ENCODE measurements at regions of chr12 and their contacts with region 1.

Region 1: DNA sequence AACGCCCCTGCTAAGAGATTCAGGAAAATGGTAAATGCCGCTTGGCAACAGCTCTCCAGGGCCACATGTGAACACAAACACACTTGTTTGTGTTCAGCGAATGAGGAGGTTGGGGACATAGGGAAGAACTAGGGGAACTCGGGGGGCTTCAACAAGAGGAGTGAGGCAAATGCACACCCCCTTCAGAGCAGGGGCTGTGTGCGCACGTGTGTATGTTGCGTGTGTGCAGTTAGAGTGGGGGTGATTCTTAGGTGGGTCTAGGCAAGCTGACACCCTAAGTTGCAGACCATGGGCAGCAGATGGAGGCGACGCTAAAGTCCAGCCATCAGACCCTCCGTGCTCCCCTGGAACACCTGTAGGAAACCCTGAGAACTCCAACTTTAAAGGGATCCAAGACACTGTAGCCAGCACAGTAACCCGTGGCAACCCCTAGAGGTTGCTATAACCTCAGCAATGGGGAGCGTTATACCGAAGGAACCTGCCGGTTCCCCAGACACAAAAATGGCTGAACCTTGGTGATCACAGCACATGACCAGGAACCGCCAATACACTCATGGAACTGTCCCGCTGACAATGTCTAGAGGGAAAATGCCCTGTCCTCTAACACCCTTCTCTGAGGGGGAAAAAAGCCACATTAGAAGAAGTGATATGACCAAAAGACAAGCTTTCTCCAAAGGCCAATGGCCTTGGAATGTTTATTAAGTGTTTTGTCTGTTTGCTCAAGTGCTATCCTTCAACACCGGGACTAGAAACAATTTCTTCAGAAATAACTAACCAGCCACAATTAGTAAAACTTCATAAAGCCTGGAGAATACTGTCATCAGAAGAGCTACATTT is 86.5 kb upstream of the CEP83 start:
- DNase-seq: no peak
- ATAC-seq: peak; percentile 94

Region 2: DNA sequence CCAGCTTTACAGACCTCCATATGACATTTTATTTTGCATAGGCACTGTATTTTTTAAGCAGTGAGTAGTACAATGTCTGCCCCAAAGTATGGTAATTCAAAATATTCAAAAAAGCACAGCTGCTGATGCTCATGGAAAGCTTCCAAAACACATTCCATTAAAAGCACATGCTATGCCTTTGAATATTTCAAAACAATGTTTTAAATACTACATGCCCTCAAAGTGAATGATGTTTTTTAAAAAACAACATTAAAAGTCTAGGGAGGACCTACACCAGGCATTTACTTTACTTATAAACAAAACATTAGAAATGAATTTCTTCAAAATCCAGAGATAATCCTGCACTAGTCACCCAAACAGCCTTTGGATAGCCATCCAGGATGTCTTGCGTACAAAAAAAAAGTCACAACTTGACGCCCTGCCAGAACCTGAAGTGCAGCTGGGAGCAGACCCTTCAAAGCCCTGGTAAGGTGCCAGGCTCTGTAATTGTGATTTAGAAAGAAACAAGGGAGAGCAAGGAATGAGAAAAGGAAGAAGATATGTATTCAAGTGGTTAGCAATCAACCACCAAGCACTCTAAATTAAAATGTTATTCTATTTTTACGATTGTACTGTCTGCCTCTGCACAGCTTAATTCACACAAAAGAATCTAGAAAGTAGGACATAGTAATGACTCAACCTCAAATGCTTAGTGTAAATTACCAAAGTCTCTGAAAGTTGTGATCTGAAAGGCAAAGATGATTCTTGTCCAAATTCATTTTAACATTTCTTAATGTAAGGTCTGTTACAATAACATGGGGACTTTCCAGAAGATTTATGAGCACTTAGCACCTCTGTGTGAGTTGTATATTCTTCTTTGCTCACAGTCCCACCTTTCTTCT is 118.4 kb before region 1 on chr12:
- intact Hi-C with region 1: no loop called
- DNase-seq: no peak
- ATAC-seq: peak; percentile 78

Region 3: GRCh38 chr12:94603434-94604365 is 57.5 kb after region 1 on chr12:
- intact Hi-C with region 1: no loop called
- DNase-seq: no peak
- ATAC-seq: no peak

Region 4: DNA sequence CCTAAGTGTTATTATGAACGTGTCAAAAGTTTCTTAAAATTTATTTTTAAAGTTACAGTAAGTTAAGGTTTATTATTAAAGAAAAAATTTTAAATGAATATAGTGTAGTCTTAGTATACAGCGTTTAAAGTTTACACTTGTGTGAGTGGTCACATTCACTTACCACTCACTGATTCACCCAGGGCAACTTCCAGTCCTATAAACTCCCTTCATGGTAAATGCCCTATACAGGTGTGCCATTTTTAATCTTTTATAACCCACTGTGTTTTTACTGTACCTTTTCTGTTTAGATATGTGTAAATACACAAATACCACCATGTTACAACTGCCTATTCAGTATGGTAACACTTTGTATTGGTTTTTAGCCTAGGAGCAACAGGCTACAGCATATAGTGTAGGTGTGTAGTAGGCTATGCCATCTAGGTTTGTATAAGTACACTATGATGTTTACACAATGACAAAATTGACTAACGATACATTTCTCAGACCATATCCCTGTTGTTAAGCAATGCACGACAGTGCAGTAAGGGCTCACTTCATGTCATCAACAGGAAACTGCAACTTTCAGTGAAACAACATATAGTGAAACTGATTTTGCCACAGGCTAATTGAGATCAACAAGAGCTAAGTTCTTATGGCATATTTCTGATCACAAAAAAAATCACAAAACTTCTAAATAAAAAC is 216.2 kb after region 1 on chr12:
- intact Hi-C with region 1: loop called (anchors 10 kb)
- DNase-seq: no peak
- ATAC-seq: no peak

Region 5: GRCh38 chr12:95336390-95337067 is 790.4 kb after region 1 on chr12:
- intact Hi-C with region 1: loop called (anchors 10 kb)
- DNase-seq: peak; percentile 72
- ATAC-seq: peak; percentile 94

Measured in Right ventricle myocardium superior (tissue), 1 donor.